B cell (primary cell): ENCODE measurements at regions of chr14 and their contacts with region 1.

Region 1: GRCh38 chr14:59438195-59438647 is 27.0 kb downstream of the GPR135 start:
- DNase-seq: no peak
- ATAC-seq: no peak
- H3K4me3 ChIP-seq: no peak overlapping the region
- H3K4me3 Mint-ChIP-seq: no peak overlapping the region
- H3K27ac ChIP-seq: no peak overlapping the region
- H3K27ac Mint-ChIP-seq: no peak overlapping the region
- H3K4me1 ChIP-seq: no peaks in the 10 kb centered on the region
- H3K4me1 Mint-ChIP-seq: peaks cover 2% of the 10 kb centered on the region
- H3K27me3 ChIP-seq: no peaks in the 10 kb centered on the region
- H3K27me3 Mint-ChIP-seq: no peaks in the 10 kb centered on the region
- CTCF ChIP-seq: no peak

Region 2: DNA sequence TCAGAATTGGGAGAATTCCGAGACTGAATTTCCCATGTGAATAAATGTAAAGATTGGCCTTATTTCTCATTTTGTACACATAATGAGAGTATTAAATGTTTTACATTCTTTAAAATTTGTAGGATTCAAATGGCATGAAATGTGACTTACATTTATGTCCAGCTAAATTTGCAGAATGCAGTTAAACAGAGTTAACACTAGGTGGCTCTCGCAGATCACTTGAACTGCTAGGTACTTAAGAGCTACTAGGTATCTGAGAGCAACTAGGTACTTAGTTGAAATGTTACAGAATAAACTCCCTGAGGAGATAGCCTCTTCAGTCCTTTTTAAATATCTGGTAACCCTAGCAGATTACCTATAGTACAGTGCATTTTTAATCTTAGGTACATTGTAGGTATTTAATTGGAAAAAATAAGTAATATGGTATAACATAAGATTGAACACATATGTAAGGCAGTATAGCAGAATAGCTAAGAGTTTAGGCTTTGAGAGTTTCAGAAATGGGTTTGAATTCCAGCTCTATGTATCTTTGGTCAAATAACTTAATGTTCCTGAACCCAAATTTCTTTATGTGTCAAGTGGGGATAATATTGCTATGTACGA is 936.9 kb before region 1 on chr14:
- CTCF ChIA-PET with region 1: interaction called, 12 read pairs
- POLR2A ChIA-PET with region 1: no interaction called
- intact Hi-C with region 1: no loop called
- DNase-seq: peak; percentile 64
- ATAC-seq: peak; percentile 63
- H3K4me3 ChIP-seq: no peak overlapping the region
- H3K4me3 Mint-ChIP-seq: no peak overlapping the region
- H3K27ac ChIP-seq: no peak overlapping the region
- H3K27ac Mint-ChIP-seq: no peak overlapping the region
- H3K4me1 ChIP-seq: no peaks in the 10 kb centered on the region
- H3K4me1 Mint-ChIP-seq: no peaks in the 10 kb centered on the region
- H3K27me3 ChIP-seq: no peaks in the 10 kb centered on the region
- H3K27me3 Mint-ChIP-seq: no peaks in the 10 kb centered on the region
- CTCF ChIP-seq: peak; percentile 94

Region 3: GRCh38 chr14:59028476-59029202 is 409.6 kb before region 1 on chr14:
- CTCF ChIA-PET with region 1: interaction called, 10 read pairs
- POLR2A ChIA-PET with region 1: no interaction called
- intact Hi-C with region 1: no loop called
- DNase-seq: peak; percentile 41
- ATAC-seq: peak; percentile 45
- H3K4me3 ChIP-seq: no peak overlapping the region
- H3K4me3 Mint-ChIP-seq: no peak overlapping the region
- H3K27ac ChIP-seq: no peak overlapping the region
- H3K27ac Mint-ChIP-seq: no peak overlapping the region
- H3K4me1 ChIP-seq: no peaks in the 10 kb centered on the region
- H3K4me1 Mint-ChIP-seq: peaks cover 4% of the 10 kb centered on the region
- H3K27me3 ChIP-seq: no peaks in the 10 kb centered on the region
- H3K27me3 Mint-ChIP-seq: peaks cover 24% of the 10 kb centered on the region
- CTCF ChIP-seq: peak; percentile 54

Region 4: GRCh38 chr14:59120921-59121320 is 317.3 kb before region 1 on chr14:
- CTCF ChIA-PET with region 1: interaction called, 76 read pairs
- POLR2A ChIA-PET with region 1: no interaction called
- intact Hi-C with region 1: no loop called
- DNase-seq: no peak
- ATAC-seq: no peak
- H3K4me3 ChIP-seq: no peak overlapping the region
- H3K4me3 Mint-ChIP-seq: no peak overlapping the region
- H3K27ac ChIP-seq: no peak overlapping the region
- H3K27ac Mint-ChIP-seq: no peak overlapping the region
- H3K4me1 ChIP-seq: no peaks in the 10 kb centered on the region
- H3K4me1 Mint-ChIP-seq: no peaks in the 10 kb centered on the region
- H3K27me3 ChIP-seq: peaks cover 0 to 4% (median 2%) of the 10 kb centered on the region in 4 experiments
- H3K27me3 Mint-ChIP-seq: peaks cover 14% of the 10 kb centered on the region
- CTCF ChIP-seq: no peak

Region 5: GRCh38 chr14:59126710-59127432 is 311.4 kb before region 1 on chr14:
- CTCF ChIA-PET with region 1: interaction called, 76 read pairs
- POLR2A ChIA-PET with region 1: no interaction called
- intact Hi-C with region 1: no loop called
- DNase-seq: peak; percentile 73
- ATAC-seq: peak; percentile 80
- H3K4me3 ChIP-seq: no peak overlapping the region
- H3K4me3 Mint-ChIP-seq: no peak overlapping the region
- H3K27ac ChIP-seq: no peak overlapping the region
- H3K27ac Mint-ChIP-seq: no peak overlapping the region
- H3K4me1 ChIP-seq: no peaks in the 10 kb centered on the region
- H3K4me1 Mint-ChIP-seq: peaks cover 3% of the 10 kb centered on the region
- H3K27me3 ChIP-seq: peaks cover 0 to 4% (median 1%) of the 10 kb centered on the region in 4 experiments
- H3K27me3 Mint-ChIP-seq: peaks cover 8% of the 10 kb centered on the region
- CTCF ChIP-seq: peak; percentile 94

Region 6: GRCh38 chr14:59132796-59133494 is 305.3 kb before region 1 on chr14:
- CTCF ChIA-PET with region 1: interaction called, 76 read pairs
- POLR2A ChIA-PET with region 1: no interaction called
- intact Hi-C with region 1: no loop called
- DNase-seq: no peak
- ATAC-seq: no peak
- H3K4me3 ChIP-seq: no peak overlapping the region
- H3K4me3 Mint-ChIP-seq: no peak overlapping the region
- H3K27ac ChIP-seq: no peak overlapping the region
- H3K27ac Mint-ChIP-seq: no peak overlapping the region
- H3K4me1 ChIP-seq: no peaks in the 10 kb centered on the region
- H3K4me1 Mint-ChIP-seq: no peaks in the 10 kb centered on the region
- H3K27me3 ChIP-seq: peaks cover 0 to 4% (median 0%) of the 10 kb centered on the region in 4 experiments
- H3K27me3 Mint-ChIP-seq: no peaks in the 10 kb centered on the region
- CTCF ChIP-seq: no peak

Region 7: DNA sequence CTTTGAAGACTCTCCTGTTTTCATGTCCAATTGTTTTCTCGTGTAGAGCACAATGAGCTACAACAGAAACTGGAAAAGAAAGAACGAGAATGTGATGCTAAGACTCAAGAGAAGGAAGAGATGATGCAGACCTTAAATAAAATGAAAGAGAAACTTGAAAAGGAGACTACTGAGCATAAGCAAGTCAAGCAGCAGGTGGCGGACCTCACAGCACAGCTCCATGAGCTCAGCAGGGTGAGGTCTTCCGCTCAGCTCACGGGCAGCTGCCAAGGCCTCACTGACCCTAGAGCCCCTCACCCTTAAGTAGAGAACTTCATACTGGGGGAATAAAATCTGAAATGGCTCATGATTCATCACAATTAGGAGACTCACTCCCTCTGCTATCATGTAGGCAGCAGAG is 107.8 kb before region 1 on chr14:
- CTCF ChIA-PET with region 1: interaction called, 10 read pairs
- POLR2A ChIA-PET with region 1: no interaction called
- intact Hi-C with region 1: no loop called
- DNase-seq: peak; percentile 29
- ATAC-seq: peak; percentile 51
- H3K4me3 ChIP-seq: peak overlapping the region in 1 of 5 experiments; percentile 26
- H3K4me3 Mint-ChIP-seq: no peak overlapping the region
- H3K27ac ChIP-seq: peak overlapping the region in 1 of 2 donors; percentile 42
- H3K27ac Mint-ChIP-seq: peak overlapping the region; percentile 82
- H3K4me1 ChIP-seq: no peaks in the 10 kb centered on the region
- H3K4me1 Mint-ChIP-seq: peaks cover 2% of the 10 kb centered on the region
- H3K27me3 ChIP-seq: no peaks in the 10 kb centered on the region
- H3K27me3 Mint-ChIP-seq: no peaks in the 10 kb centered on the region
- CTCF ChIP-seq: no peak

Region 8: GRCh38 chr14:59500732-59501131 is 62.5 kb after region 1 on chr14:
- CTCF ChIA-PET with region 1: no interaction called
- POLR2A ChIA-PET with region 1: no interaction called
- intact Hi-C with region 1: no loop called
- DNase-seq: no peak
- ATAC-seq: no peak
- H3K4me3 ChIP-seq: no peak overlapping the region
- H3K4me3 Mint-ChIP-seq: no peak overlapping the region
- H3K27ac ChIP-seq: no peak overlapping the region
- H3K27ac Mint-ChIP-seq: no peak overlapping the region
- H3K4me1 ChIP-seq: no peaks in the 10 kb centered on the region
- H3K4me1 Mint-ChIP-seq: no peaks in the 10 kb centered on the region
- H3K27me3 ChIP-seq: no peaks in the 10 kb centered on the region
- H3K27me3 Mint-ChIP-seq: no peaks in the 10 kb centered on the region
- CTCF ChIP-seq: no peak